T-cell (primary cell): ENCODE measurements at regions of chr5 and their contacts with region 1.

Region 1: DNA sequence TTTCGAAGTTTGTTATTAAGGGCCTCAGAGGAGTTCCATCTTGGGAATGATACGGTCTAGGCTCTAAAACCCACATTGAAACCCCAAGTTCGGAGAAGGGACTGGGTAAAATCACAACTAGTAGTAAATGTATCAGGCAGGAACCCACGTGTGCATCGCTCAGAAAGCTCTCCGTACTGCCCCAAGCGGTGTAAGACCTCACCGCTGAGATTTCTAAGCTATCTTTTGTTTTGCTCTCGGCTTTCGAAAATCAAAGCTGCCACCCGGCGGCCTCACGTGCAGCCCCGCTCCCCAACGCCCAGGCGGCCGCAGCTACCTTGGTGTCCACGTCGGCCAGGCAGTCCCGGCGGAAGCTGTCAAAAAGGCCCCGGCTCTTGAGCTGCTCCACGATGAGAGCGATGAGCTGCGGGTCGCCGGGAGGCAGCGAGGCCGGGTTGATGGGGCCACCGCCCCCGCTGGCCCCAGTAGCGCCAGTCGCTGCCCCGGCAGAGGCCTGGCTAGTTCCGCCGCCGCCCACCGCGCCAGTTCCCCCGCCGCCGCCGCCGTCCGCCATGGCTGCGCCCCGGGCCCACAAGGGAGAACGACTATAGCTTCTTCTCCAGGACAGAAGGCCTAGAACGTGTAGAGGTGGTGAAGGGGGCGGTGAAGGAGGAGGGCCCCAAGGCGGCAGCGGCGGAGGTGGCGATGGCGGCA is 420 bp downstream of the BOD1 start:
- DNase-seq: peak; percentile 40 to 84 (median 67)
- ATAC-seq: peak; percentile 67 to 70 (median 68)
- H3K4me3 ChIP-seq: peak overlapping the region; percentile 76 to 87
- H3K4me3 Mint-ChIP-seq: peak overlapping the region; percentile 80 to 91 (median 88)
- H3K27ac ChIP-seq: peak overlapping the region; percentile 76
- H3K27ac Mint-ChIP-seq: peak overlapping the region; percentile 91 to 96
- H3K4me1 ChIP-seq: peaks cover 18 to 21% of the 10 kb centered on the region in 2 experiments
- H3K4me1 Mint-ChIP-seq: peaks cover 48 to 56% (median 53%) of the 10 kb centered on the region in 3 donors
- H3K27me3 ChIP-seq: no peaks in the 10 kb centered on the region
- H3K27me3 Mint-ChIP-seq: no peaks in the 10 kb centered on the region

Region 2: DNA sequence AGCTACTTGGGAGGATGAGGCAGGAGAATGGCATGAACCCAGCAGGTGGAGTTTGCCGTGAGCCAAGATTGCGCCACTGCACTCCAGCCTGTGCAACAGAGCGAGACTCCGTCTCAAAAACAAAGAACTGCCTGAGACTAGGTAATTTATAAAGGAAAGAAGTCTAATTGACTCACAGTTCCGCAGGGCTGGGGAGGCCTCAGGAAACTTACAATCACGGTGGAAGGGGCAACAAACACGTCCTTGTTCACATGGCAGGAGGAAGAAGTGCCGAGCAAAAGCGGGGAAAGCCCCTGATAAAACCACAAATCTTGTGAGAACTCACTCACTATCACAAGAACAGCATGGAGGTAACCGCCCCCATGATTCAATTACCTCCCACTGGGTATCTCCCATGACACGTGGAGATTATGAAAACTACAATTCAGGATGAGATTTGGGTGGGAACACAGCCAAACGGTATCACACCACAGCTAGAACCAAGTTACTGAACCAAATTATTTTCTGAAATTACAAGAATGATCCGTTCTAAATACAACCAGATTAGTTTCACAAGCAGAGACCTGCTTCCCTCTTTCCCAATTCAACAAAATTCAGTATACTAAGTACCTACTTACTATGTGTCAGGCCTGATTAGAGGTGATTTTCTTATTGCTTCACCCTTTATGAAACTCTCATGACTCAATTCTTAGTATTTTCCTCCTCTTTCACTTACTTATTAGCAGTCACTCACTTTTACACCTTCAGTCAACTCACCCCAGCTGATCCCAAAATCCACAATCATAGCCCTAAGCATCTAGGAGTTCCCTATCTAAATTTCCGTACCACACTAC is 1340.9 kb before region 1 on chr5:
- CTCF ChIA-PET with region 1: no interaction called
- POLR2A ChIA-PET with region 1: interaction called in 1 of 2 experiments, 16 read pairs
- DNase-seq: peak in 31 of 35 experiments; percentile 7 to 69 (median 32)
- ATAC-seq: peak in 3 of 4 experiments; percentile 58 to 90 (median 61)
- H3K4me3 ChIP-seq: no peak overlapping the region
- H3K4me3 Mint-ChIP-seq: no peak overlapping the region
- H3K27ac ChIP-seq: no peak overlapping the region
- H3K27ac Mint-ChIP-seq: no peak overlapping the region
- H3K4me1 ChIP-seq: peaks cover 0 to 4% of the 10 kb centered on the region in 2 experiments
- H3K4me1 Mint-ChIP-seq: peaks cover 32 to 36% (median 33%) of the 10 kb centered on the region in 3 donors
- H3K27me3 ChIP-seq: no peaks in the 10 kb centered on the region
- H3K27me3 Mint-ChIP-seq: no peaks in the 10 kb centered on the region

Region 3: GRCh38 chr5:173563252-173563651 is 52.8 kb before region 1 on chr5:
- CTCF ChIA-PET with region 1: no interaction called
- POLR2A ChIA-PET with region 1: no interaction called
- DNase-seq: no peak
- ATAC-seq: no peak
- H3K4me3 ChIP-seq: no peak overlapping the region
- H3K4me3 Mint-ChIP-seq: no peak overlapping the region
- H3K27ac ChIP-seq: no peak overlapping the region
- H3K27ac Mint-ChIP-seq: no peak overlapping the region
- H3K4me1 ChIP-seq: no peaks in the 10 kb centered on the region
- H3K4me1 Mint-ChIP-seq: no peaks in the 10 kb centered on the region
- H3K27me3 ChIP-seq: peaks cover 0 to 13% of the 10 kb centered on the region in 2 experiments
- H3K27me3 Mint-ChIP-seq: peaks cover 25 to 28% of the 10 kb centered on the region in 2 donors

Region 4: DNA sequence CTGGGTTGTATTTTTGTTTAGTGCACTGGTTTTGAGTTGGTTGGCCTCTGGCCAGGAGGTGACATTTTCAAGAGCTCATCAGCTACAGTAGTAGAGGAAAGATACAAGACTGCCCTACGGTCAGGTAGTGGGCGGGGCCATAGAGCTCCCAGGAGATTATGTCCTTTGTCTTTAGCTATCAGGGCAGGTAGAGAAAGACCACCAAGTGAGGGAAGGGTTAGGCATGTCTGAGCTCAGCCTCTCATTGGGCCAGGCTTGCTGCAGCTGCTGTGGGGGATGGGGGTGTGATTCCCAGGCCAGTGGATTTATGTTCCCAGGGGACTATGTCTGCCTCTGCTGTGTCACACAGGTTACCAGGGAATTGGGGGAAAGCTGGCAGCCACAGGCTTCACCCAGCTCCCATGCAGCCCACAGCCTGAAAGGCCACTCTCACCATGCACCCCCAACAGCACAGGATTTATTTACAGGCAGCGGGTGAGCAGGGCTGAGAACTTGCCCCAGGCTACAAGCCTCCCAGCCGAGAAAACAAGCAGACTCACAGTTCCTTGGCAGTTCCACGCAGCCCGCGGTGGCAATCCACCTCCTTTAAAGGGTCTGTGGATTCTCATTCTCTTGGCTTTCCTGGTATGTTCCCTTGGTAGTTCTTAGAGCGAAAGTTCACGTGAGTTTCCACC is 37.9 kb after region 1 on chr5:
- CTCF ChIA-PET with region 1: no interaction called
- POLR2A ChIA-PET with region 1: no interaction called
- DNase-seq: no peak
- ATAC-seq: no peak
- H3K4me3 ChIP-seq: no peak overlapping the region
- H3K4me3 Mint-ChIP-seq: no peak overlapping the region
- H3K27ac ChIP-seq: no peak overlapping the region
- H3K27ac Mint-ChIP-seq: no peak overlapping the region
- H3K4me1 ChIP-seq: no peaks in the 10 kb centered on the region
- H3K4me1 Mint-ChIP-seq: no peaks in the 10 kb centered on the region
- H3K27me3 ChIP-seq: peaks cover 0 to 16% of the 10 kb centered on the region in 2 experiments
- H3K27me3 Mint-ChIP-seq: peaks cover 25 to 31% of the 10 kb centered on the region in 2 donors

Region 5: DNA sequence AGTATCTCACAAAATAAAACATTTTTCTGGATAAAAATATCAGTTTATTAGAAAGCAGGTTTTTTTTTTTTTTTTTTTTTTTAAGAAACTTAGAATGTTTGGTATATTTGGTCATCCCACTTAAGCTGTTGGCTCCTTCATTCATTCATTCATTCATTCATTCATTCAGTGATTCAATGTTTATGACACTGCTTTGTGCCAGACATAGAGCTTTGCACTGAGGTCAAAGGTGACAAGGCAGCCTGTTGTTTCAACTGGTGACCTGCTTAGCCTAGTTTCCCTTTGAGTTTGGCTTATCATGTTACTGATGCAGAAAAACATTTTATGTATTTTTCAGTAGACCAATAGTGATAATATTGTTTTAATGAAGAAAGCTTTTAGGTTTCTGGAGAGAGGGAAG is 295.6 kb after region 1 on chr5:
- CTCF ChIA-PET with region 1: interaction called in 1 of 2 experiments, 3 read pairs
- POLR2A ChIA-PET with region 1: interaction called in 1 of 2 experiments, 11 read pairs
- DNase-seq: no peak
- ATAC-seq: no peak
- H3K4me3 ChIP-seq: no peak overlapping the region
- H3K4me3 Mint-ChIP-seq: no peak overlapping the region
- H3K27ac ChIP-seq: no peak overlapping the region
- H3K27ac Mint-ChIP-seq: no peak overlapping the region
- H3K4me1 ChIP-seq: no peaks in the 10 kb centered on the region
- H3K4me1 Mint-ChIP-seq: peaks cover 19 to 24% (median 22%) of the 10 kb centered on the region in 3 donors
- H3K27me3 ChIP-seq: no peaks in the 10 kb centered on the region
- H3K27me3 Mint-ChIP-seq: no peaks in the 10 kb centered on the region

Region 6: GRCh38 chr5:173925448-173926071 is 309.5 kb after region 1 on chr5:
- CTCF ChIA-PET with region 1: interaction called, 5 to 62 read pairs
- POLR2A ChIA-PET with region 1: interaction called in 1 of 2 experiments, 3 read pairs
- DNase-seq: peak in 31 of 35 experiments; percentile 12 to 70 (median 40)
- ATAC-seq: peak in 2 of 4 experiments; percentile 43 to 44
- H3K4me3 ChIP-seq: no peak overlapping the region
- H3K4me3 Mint-ChIP-seq: no peak overlapping the region
- H3K27ac ChIP-seq: no peak overlapping the region
- H3K27ac Mint-ChIP-seq: no peak overlapping the region
- H3K4me1 ChIP-seq: no peaks in the 10 kb centered on the region
- H3K4me1 Mint-ChIP-seq: peaks cover 25 to 35% (median 28%) of the 10 kb centered on the region in 3 donors
- H3K27me3 ChIP-seq: no peaks in the 10 kb centered on the region
- H3K27me3 Mint-ChIP-seq: no peaks in the 10 kb centered on the region

Region 7: GRCh38 chr5:173972925-173973615 is 357.0 kb after region 1 on chr5:
- CTCF ChIA-PET with region 1: interaction called, 24 to 70 read pairs
- POLR2A ChIA-PET with region 1: no interaction called
- DNase-seq: peak; percentile 39 to 86 (median 69)
- ATAC-seq: peak; percentile 81 to 86 (median 84)
- H3K4me3 ChIP-seq: peak overlapping the region; percentile 30 to 58
- H3K4me3 Mint-ChIP-seq: peak overlapping the region; percentile 72 to 77 (median 74)
- H3K27ac ChIP-seq: no peak overlapping the region
- H3K27ac Mint-ChIP-seq: no peak overlapping the region
- H3K4me1 ChIP-seq: peaks cover 0 to 15% of the 10 kb centered on the region in 2 experiments
- H3K4me1 Mint-ChIP-seq: peaks cover 9 to 13% (median 10%) of the 10 kb centered on the region in 3 donors
- H3K27me3 ChIP-seq: peaks cover 0 to 30% of the 10 kb centered on the region in 2 experiments
- H3K27me3 Mint-ChIP-seq: peaks cover 13 to 23% of the 10 kb centered on the region in 2 donors